ENCODE measurements at regions of chrX and their contacts with region 1.

Region 1: DNA sequence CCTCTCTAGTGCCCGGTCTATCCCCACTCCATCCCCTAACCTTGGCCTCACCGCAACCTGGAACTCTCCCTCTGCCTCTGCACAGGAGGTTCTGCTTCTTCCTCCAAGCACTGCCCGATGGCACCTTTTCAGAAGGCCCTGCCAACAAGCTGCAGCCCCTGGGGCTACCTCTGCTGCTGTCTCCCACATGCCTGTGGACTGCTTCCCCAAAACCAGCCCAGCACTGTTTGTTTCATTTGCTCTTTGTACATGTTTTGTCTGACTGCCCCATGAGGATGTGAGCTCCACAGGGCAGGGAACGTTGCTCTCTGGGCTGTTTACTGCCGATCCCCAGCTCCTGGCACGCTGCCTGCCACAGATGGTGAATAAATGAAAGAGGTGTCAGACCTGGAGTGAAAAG is 85.4 kb downstream of the INTS6L start:
- DNase-seq: no peak
- H3K4me3 ChIP-seq: no peak overlapping the region
- H3K4me3 Mint-ChIP-seq: no peak overlapping the region
- H3K27ac Mint-ChIP-seq: no peak overlapping the region
- H3K4me1 ChIP-seq: no peaks in the 10 kb centered on the region
- H3K4me1 Mint-ChIP-seq: no peaks in the 10 kb centered on the region
- H3K27me3 ChIP-seq: no peaks in the 10 kb centered on the region
- H3K27me3 Mint-ChIP-seq: peaks cover 3% of the 10 kb centered on the region
- CTCF ChIP-seq: no peak

Region 2: GRCh38 chrX:135411893-135412292 is 194.0 kb before region 1 on chrX:
- CTCF ChIA-PET with region 1: no interaction called
- POLR2A ChIA-PET with region 1: no interaction called
- intact Hi-C with region 1: no loop called
- DNase-seq: no peak
- H3K4me3 ChIP-seq: no peak overlapping the region
- H3K4me3 Mint-ChIP-seq: no peak overlapping the region
- H3K27ac Mint-ChIP-seq: no peak overlapping the region
- H3K4me1 ChIP-seq: peaks cover 10% of the 10 kb centered on the region; the same call in 1 of the 2 replicates
- H3K4me1 Mint-ChIP-seq: peaks cover 6% of the 10 kb centered on the region
- H3K27me3 ChIP-seq: no peaks in the 10 kb centered on the region
- H3K27me3 Mint-ChIP-seq: no peaks in the 10 kb centered on the region
- CTCF ChIP-seq: no peak

Region 3: GRCh38 chrX:135652611-135653010 is 46.7 kb after region 1 on chrX:
- CTCF ChIA-PET with region 1: no interaction called
- POLR2A ChIA-PET with region 1: no interaction called
- intact Hi-C with region 1: loop called (anchors 5 kb)
- DNase-seq: no peak
- H3K4me3 ChIP-seq: no peak overlapping the region
- H3K4me3 Mint-ChIP-seq: no peak overlapping the region
- H3K27ac Mint-ChIP-seq: no peak overlapping the region
- H3K4me1 ChIP-seq: no peaks in the 10 kb centered on the region
- H3K4me1 Mint-ChIP-seq: no peaks in the 10 kb centered on the region
- H3K27me3 ChIP-seq: no peaks in the 10 kb centered on the region
- H3K27me3 Mint-ChIP-seq: no peaks in the 10 kb centered on the region
- CTCF ChIP-seq: no peak

Region 4: DNA sequence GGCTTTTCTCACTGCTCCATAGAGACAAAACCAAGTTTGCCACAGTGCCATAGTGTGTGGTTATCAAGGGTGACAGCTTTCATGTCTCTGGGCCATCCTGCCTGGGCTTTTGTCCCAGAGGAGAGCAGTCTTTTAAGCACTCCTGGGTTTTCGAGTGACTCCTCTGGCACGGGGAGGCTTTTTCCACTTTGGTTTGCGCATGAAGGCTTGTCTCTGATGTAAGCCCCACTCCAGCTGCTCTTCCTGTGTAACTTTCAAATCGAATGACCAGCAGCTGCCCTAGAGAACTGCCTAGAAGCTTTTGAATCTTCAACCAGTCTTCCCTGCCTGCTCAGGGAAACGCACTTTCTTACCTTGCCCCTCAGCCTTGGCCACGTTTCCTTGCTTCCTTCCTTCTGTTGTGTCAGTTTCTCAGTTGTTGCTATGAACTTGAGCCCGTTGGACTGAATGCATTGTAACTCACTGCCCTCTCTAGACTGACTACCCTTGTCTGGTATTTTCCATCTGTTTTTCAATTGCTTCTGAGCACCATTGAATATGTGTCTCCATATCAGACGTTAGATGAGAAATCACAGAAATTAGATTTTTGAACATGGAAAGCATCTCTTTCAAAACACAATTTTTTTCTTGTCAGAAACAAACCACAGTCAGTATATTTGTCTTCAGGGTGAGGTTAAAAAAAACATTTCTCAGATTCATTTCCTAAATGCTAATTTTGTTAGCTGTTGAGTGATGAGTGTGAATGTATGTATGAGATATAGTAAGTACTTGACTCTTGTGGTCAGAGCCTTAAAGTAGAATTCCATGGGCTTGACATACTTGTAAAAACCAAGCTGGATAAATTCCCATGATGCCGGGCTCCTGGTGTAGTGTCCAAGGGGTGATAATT is 424.6 kb after region 1 on chrX:
- CTCF ChIA-PET with region 1: no interaction called
- POLR2A ChIA-PET with region 1: no interaction called
- intact Hi-C with region 1: no loop called
- DNase-seq: no peak
- H3K4me3 ChIP-seq: no peak overlapping the region
- H3K4me3 Mint-ChIP-seq: no peak overlapping the region
- H3K27ac Mint-ChIP-seq: no peak overlapping the region
- H3K4me1 ChIP-seq: no peaks in the 10 kb centered on the region
- H3K4me1 Mint-ChIP-seq: no peaks in the 10 kb centered on the region
- H3K27me3 ChIP-seq: no peaks in the 10 kb centered on the region
- H3K27me3 Mint-ChIP-seq: no peaks in the 10 kb centered on the region
- CTCF ChIP-seq: no peak

Measured in Caco-2 (cell line).